K562 (cell line): ENCODE measurements at regions of chr10 and their contacts with region 1.

Region 1: DNA sequence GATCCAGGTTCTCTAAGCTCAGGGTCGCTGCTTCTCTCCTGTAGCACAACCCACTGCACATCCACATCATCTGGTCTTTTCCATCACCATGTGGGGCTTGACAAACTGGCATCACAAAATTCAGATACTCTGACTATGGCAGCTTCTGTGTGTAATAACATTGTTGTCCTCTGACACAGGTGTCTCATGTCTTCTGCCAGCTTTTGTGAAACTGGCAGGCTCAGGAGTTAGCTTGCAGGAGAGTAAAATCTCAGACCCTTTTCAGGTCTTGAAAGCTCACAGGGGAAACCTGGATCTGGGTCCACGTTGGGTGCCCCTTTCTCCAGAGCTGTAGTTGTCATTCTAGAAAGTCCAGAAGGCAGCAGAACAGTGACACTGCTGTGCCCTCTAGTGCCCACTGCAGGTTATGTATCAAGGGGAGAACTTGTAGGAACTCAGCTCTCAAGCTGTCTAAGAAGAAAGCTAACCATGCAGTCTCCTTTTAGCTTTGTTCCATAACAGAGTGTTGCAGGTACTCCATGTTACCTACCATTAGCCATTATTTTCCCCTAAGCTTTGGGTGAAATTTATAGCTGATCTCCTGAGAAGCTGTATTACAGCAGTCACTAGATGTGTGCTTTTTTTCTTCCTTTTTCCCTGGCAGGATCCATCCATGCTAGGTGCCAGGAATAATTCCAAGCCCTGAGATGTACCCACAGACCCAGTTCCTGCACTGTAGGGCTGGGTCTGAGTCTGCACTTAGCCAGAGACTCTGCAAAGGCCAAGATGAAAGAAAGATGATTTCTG is 102.7 kb downstream of the ZNF248 start:
- DNase-seq: peak in 3 of 4 experiments; percentile 11 to 28 (median 16)
- ATAC-seq: peak; percentile 77
- H3K4me3 ChIP-seq: no peak overlapping the region
- H3K27ac ChIP-seq: no peak overlapping the region
- H3K4me1 ChIP-seq: no peaks in the 10 kb centered on the region
- H3K27me3 ChIP-seq: no peaks in the 10 kb centered on the region
- CTCF ChIP-seq: peak; percentile 24 to 54 (median 43); a peak in 4 of 6 replicates
- EP300 ChIP-seq: no peak
- POLR2A ChIP-seq: no peak
- RAD21 ChIP-seq: peak; percentile 34 to 42

Region 2: DNA sequence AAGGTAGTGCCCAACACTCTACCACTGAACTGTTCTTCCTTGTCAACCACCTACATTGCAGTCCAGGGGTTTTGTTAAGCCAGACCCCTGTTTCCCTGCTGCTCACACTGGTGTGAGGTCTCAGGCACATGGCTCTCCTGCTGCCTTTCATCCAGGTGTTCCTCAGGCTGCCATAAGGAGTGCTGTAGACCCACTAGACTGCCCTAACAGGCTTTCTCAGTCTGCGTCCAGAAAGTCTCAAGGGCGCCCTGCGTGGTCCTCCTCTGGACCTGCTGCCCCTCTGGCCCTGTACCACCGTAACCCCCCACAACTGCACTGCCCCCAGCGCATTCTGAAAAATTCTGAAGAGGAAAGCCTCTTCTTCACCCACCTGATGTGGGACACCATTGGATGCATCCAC is 855.1 kb before region 1 on chr10:
- CTCF ChIA-PET with region 1: no interaction called
- POLR2A ChIA-PET with region 1: no interaction called
- in situ Hi-C with region 1: no loop called
- intact Hi-C with region 1: loop called (anchors 5 kb)
- DNase-seq: no peak
- ATAC-seq: no peak
- H3K4me3 ChIP-seq: no peak overlapping the region
- H3K27ac ChIP-seq: no peak overlapping the region
- H3K4me1 ChIP-seq: no peaks in the 10 kb centered on the region
- H3K27me3 ChIP-seq: no peaks in the 10 kb centered on the region
- CTCF ChIP-seq: no peak
- EP300 ChIP-seq: no peak
- POLR2A ChIP-seq: no peak
- RAD21 ChIP-seq: no peak

Region 3: DNA sequence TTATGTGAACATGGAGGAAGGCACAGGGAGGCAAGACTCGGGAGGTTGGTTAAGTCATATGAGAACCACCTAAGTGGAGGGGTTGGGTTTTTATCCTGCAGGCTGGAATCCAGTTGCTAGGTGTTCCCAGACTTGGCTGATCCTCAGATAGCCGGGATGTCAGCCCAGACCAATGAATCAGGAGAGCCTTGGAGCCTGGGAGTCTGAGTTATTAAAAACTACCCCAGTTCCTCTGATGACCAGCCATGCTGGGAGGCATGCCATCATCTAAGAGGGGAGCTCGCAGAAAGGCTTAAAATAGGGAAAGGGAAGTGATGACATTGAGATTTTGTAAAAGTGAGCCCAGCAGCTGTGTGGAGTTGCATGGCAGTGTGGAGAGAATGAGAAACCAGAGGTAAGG is 135.4 kb before region 1 on chr10:
- CTCF ChIA-PET with region 1: no interaction called
- POLR2A ChIA-PET with region 1: no interaction called
- in situ Hi-C with region 1: no loop called
- intact Hi-C with region 1: no loop called
- DNase-seq: no peak
- ATAC-seq: no peak
- H3K4me3 ChIP-seq: no peak overlapping the region
- H3K27ac ChIP-seq: no peak overlapping the region
- H3K4me1 ChIP-seq: no peaks in the 10 kb centered on the region
- H3K27me3 ChIP-seq: no peaks in the 10 kb centered on the region
- CTCF ChIP-seq: no peak
- EP300 ChIP-seq: no peak
- POLR2A ChIP-seq: no peak
- RAD21 ChIP-seq: no peak

Region 4: GRCh38 chr10:37896436-37896835 is 141.7 kb after region 1 on chr10:
- CTCF ChIA-PET with region 1: no interaction called
- POLR2A ChIA-PET with region 1: no interaction called
- in situ Hi-C with region 1: no loop called
- intact Hi-C with region 1: no loop called
- DNase-seq: no peak
- ATAC-seq: no peak
- H3K4me3 ChIP-seq: no peak overlapping the region
- H3K27ac ChIP-seq: no peak overlapping the region
- H3K4me1 ChIP-seq: no peaks in the 10 kb centered on the region
- H3K27me3 ChIP-seq: no peaks in the 10 kb centered on the region
- CTCF ChIP-seq: no peak
- EP300 ChIP-seq: no peak
- POLR2A ChIP-seq: no peak
- RAD21 ChIP-seq: no peak

Region 5: GRCh38 chr10:37937864-37938263 is 183.1 kb after region 1 on chr10:
- CTCF ChIA-PET with region 1: no interaction called
- POLR2A ChIA-PET with region 1: no interaction called
- in situ Hi-C with region 1: no loop called
- intact Hi-C with region 1: loop called (anchors 10 kb)
- DNase-seq: peak in 3 of 4 experiments; percentile 9 to 16 (median 15)
- ATAC-seq: peak; percentile 64
- H3K4me3 ChIP-seq: no peak overlapping the region
- H3K27ac ChIP-seq: no peak overlapping the region
- H3K4me1 ChIP-seq: no peaks in the 10 kb centered on the region
- H3K27me3 ChIP-seq: peaks cover 0 to 7% of the 10 kb centered on the region in 2 experiments; a peak in 1 of 5 replicates
- CTCF ChIP-seq: peak; percentile 22 to 38 (median 24); a peak in 3 of 6 replicates
- EP300 ChIP-seq: no peak
- POLR2A ChIP-seq: no peak
- RAD21 ChIP-seq: no peak